HCT116 (cell line): ENCODE measurements at regions of chr6 and their contacts with region 1.

Region 1: GRCh38 chr6:159252955-159253508 is 83.8 kb downstream of the FNDC1 start:
- DNase-seq: peak; percentile 33
- ATAC-seq: peak; percentile 94
- H3K4me3 ChIP-seq: no peak overlapping the region
- H3K27ac ChIP-seq: no peak overlapping the region
- H3K4me1 ChIP-seq: 0 out of 4 replicates have a peak, but pooled peaks cover 0 to 3% of the 10 kb centered on the region in 2 experiments
- H3K27me3 ChIP-seq: 0 out of 2 replicates have a peak, but pooled peaks cover 6% of the 10 kb centered on the region
- CTCF ChIP-seq: peak; percentile 36 to 69 (median 66); a peak in 5 of 6 replicates
- POLR2A ChIP-seq: no peak
- RAD21 ChIP-seq: peak; percentile 37; the same call in 1 of the 2 replicates

Region 2: DNA sequence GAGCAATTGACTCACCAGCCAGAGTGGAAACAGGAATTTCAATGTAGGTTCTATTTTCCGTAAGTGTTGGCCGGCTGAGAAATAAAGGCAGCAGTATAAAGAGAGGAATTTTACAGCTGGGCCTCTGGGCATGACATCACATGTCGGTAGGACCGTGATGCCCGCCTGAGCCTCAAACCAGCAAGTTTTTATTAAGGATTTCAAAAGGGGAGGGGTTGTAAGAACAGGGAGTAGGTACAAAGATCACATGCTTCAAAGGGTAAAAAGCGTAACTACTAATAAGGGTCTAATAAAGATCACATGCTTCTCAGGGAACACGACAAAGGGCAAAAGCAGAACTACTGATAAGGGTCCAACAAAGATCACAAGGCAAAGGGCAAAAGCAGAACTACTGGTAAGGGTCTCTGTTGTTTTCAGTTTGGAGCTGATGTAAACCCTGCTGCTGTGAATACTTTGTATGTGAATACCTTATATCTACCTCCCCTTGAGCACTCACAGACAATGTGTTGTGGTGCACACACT is 949.8 kb before region 1 on chr6:
- CTCF ChIA-PET with region 1: no interaction called
- POLR2A ChIA-PET with region 1: no interaction called
- RAD21 ChIA-PET with region 1: no interaction called
- intact Hi-C with region 1: no loop called
- DNase-seq: no peak
- ATAC-seq: no peak
- H3K4me3 ChIP-seq: no peak overlapping the region
- H3K27ac ChIP-seq: no peak overlapping the region
- H3K4me1 ChIP-seq: peaks cover 0 to 7% of the 10 kb centered on the region in 2 experiments; a peak in 1 of 4 replicates
- H3K27me3 ChIP-seq: no peaks in the 10 kb centered on the region
- CTCF ChIP-seq: no peak
- POLR2A ChIP-seq: no peak
- RAD21 ChIP-seq: no peak

Region 3: DNA sequence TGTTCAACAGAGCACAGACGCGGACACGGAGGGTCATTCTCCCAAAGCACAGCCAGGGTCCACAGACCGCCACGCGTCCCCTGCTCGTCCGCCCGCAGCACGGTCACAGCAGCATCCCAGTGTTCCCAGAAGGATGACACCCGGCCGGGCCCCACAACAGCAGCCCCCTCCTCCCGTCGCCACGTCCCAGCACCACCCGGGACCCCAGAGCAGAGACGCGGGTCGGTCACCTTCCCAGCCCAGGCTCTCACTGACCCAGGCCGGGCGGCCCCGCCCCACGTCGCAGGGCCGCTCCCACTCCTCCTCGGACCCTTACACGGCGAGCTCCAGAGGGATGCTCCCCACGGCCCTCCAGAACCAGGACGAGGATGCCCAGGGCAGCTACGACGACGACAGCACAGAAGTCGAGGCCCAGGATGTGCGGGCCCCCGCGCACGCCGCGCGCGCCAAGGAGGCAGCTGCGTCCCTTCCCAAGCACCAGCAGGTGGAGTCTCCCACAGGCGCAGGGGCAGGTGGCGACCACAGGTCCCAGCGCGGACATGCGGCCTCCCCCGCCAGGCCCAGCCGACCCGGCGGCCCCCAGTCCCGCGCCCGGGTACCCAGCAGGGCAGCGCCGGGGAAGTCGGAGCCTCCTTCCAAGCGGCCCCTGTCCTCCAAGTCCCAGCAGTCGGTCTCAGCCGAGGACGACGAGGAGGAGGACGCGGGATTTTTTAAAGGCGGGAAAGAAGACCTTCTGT is 19.5 kb before region 1 on chr6:
- CTCF ChIA-PET with region 1: interaction called, 15 read pairs
- POLR2A ChIA-PET with region 1: no interaction called
- RAD21 ChIA-PET with region 1: no interaction called
- intact Hi-C with region 1: no loop called
- DNase-seq: no peak
- ATAC-seq: no peak
- H3K4me3 ChIP-seq: no peak overlapping the region
- H3K27ac ChIP-seq: no peak overlapping the region
- H3K4me1 ChIP-seq: no peaks in the 10 kb centered on the region
- H3K27me3 ChIP-seq: peaks cover 30% of the 10 kb centered on the region
- CTCF ChIP-seq: no peak
- POLR2A ChIP-seq: no peak
- RAD21 ChIP-seq: no peak

Region 4: GRCh38 chr6:159238920-159239558 is 14.0 kb before region 1 on chr6:
- CTCF ChIA-PET with region 1: interaction called, 15 read pairs
- POLR2A ChIA-PET with region 1: no interaction called
- RAD21 ChIA-PET with region 1: no interaction called
- intact Hi-C with region 1: no loop called
- DNase-seq: no peak
- ATAC-seq: no peak
- H3K4me3 ChIP-seq: no peak overlapping the region
- H3K27ac ChIP-seq: no peak overlapping the region
- H3K4me1 ChIP-seq: no peaks in the 10 kb centered on the region
- H3K27me3 ChIP-seq: peaks cover 28% of the 10 kb centered on the region; the same call in 1 of the 2 replicates
- CTCF ChIP-seq: no peak
- POLR2A ChIP-seq: no peak
- RAD21 ChIP-seq: no peak

Region 5: GRCh38 chr6:159483259-159483658 is 230.2 kb after region 1 on chr6:
- CTCF ChIA-PET with region 1: no interaction called
- POLR2A ChIA-PET with region 1: no interaction called
- RAD21 ChIA-PET with region 1: no interaction called
- intact Hi-C with region 1: no loop called
- DNase-seq: no peak
- ATAC-seq: no peak
- H3K4me3 ChIP-seq: no peak overlapping the region
- H3K27ac ChIP-seq: no peak overlapping the region
- H3K4me1 ChIP-seq: no peaks in the 10 kb centered on the region
- H3K27me3 ChIP-seq: peaks cover 15% of the 10 kb centered on the region; the same call in 1 of the 2 replicates
- CTCF ChIP-seq: no peak
- POLR2A ChIP-seq: no peak
- RAD21 ChIP-seq: no peak

Region 6: GRCh38 chr6:159608961-159609651 is 356.1 kb after region 1 on chr6:
- CTCF ChIA-PET with region 1: interaction called, 16 read pairs
- POLR2A ChIA-PET with region 1: no interaction called
- RAD21 ChIA-PET with region 1: interaction called in 1 of 2 experiments, 5 read pairs
- intact Hi-C with region 1: loop called (anchors 1 kb)
- DNase-seq: peak; percentile 58
- ATAC-seq: peak; percentile 97
- H3K4me3 ChIP-seq: no peak overlapping the region
- H3K27ac ChIP-seq: no peak overlapping the region
- H3K4me1 ChIP-seq: no peaks in the 10 kb centered on the region
- H3K27me3 ChIP-seq: no peaks in the 10 kb centered on the region
- CTCF ChIP-seq: peak; percentile 89 to 95 (median 94)
- POLR2A ChIP-seq: no peak
- RAD21 ChIP-seq: peak; percentile 96